Activated CD4-positive, alpha-beta T cell treated with anti-CD3 and anti-CD28 coated beads, Interleukin-2, amount 10 ng/mL, durations not matched to agents 24 days and 14 days (primary cell): ENCODE measurements at regions of chr6 and their contacts with region 1.

Region 1: GRCh38 chr6:99618649-99619408 is 12.2 kb downstream of the PRDM13 start:
- DNase-seq: no peak
- H3K4me3 Mint-ChIP-seq: no peak overlapping the region
- H3K27ac Mint-ChIP-seq: no peak overlapping the region
- H3K4me1 Mint-ChIP-seq: peaks cover 7% of the 10 kb centered on the region
- H3K27me3 Mint-ChIP-seq: peaks cover 78% of the 10 kb centered on the region

Region 2: DNA sequence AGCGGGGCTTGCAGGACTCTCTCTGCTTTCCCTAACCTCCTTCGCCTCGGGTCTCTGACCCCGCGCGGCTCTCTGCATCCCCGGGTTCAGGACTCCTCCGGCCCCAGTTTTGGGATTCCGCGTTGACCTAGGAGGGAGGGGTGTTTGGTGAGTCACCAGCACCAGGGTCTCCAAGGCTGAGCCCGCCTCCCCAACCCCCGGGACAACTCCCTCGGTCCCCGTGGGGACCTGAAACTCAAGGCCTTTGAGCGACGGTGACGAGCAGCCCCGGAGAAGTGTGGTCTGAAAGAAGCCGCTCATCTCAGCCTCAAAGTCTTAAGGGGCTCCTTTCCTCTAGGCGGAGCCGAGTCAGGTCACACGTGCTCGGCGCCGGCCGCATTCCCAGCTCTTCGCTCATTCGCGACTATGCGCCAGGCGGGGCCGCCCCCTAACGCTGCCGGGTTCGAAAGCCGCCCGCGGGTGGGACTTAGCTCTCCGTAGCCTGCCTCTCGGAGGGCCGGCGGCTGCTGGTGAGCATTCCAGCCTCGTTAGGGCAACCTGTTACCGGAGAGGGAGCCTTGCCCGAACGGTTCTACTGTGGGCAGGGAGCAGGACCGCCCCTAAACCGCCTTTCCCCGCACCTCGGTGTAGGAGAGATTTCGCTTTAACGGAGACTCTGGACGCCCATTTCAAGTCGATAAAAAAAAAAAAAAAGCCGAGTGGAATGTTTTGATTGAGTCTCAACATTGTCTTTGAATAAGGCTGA is 15.2 kb before region 1 on chr6:
- intact Hi-C with region 1: loop called (anchors 2 kb)
- DNase-seq: peak; percentile 71
- H3K4me3 Mint-ChIP-seq: peak overlapping the region; percentile 39
- H3K27ac Mint-ChIP-seq: peak overlapping the region; percentile 11
- H3K4me1 Mint-ChIP-seq: peaks cover 19% of the 10 kb centered on the region
- H3K27me3 Mint-ChIP-seq: peaks cover 87% of the 10 kb centered on the region